Posterior cingulate gyrus (tissue), 11 donors: ENCODE measurements at regions of chr15 and their contacts with region 1.

Region 1: DNA sequence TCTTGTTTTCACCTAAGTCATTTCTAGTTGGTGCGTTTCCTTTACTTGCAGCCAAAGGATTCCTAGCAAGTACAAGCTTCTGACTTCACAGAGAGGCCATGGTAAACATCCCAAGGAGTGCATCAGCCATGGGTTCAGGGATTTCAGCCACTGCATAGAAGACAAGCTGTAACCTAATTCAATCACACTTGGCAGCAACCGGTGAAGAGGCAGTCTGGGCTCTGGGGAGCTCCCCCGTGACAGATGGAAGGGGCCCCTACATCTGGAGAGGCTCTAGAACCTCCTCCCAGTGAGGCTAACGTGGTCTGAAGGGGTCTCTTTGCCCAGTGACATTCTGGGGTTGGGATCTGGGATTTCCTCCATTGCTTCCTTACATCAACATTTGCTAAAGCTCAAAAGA is 8.4 kb upstream of the SNRPA1 start:
- DNase-seq: peak in 1 of 10 donors; percentile 14

Region 2: GRCh38 chr15:101121511-101122090 is 181.8 kb before region 1 on chr15:
- intact Hi-C with region 1: no loop called
- DNase-seq: peak in 8 of 10 donors; percentile 40 to 91 (median 54)

Region 3: DNA sequence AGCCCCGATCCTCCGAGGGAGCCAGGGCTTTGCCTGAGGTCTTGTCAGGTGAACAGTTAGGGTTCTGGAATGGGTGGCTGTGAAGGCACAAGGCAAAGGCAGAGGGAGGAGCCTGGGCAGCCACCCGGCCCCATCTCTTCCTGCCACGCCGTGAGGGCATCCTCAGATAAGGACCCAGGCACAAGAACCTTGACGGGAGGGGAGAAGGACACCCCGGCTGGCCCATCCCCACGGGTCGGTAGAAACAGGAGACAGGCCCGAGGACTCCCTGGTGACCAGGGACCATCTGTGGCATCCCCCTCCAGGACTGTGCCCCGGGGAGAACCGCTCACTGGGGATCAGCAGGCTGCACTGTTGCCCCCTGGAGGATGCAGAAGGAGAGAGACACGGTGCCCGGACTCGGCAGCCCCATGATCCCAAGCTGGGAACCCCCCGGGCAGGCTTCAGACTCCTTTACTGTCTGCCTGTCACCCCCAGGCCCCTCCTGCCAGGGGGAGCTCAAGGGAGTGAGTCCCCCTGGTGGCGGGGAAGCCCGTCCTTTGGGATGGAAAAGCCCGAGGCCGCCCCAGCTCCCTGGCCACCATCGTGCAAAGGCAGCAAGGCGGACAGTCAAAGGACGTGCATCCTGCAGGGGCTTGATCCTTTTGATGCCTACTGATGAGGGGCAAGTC is 198.4 kb after region 1 on chr15:
- intact Hi-C with region 1: loop called (anchors 5 kb)
- DNase-seq: peak in 6 of 10 donors; percentile 51 to 93 (median 68)